ENCODE measurements at regions of chr6 and their contacts with region 1.

Region 1: DNA sequence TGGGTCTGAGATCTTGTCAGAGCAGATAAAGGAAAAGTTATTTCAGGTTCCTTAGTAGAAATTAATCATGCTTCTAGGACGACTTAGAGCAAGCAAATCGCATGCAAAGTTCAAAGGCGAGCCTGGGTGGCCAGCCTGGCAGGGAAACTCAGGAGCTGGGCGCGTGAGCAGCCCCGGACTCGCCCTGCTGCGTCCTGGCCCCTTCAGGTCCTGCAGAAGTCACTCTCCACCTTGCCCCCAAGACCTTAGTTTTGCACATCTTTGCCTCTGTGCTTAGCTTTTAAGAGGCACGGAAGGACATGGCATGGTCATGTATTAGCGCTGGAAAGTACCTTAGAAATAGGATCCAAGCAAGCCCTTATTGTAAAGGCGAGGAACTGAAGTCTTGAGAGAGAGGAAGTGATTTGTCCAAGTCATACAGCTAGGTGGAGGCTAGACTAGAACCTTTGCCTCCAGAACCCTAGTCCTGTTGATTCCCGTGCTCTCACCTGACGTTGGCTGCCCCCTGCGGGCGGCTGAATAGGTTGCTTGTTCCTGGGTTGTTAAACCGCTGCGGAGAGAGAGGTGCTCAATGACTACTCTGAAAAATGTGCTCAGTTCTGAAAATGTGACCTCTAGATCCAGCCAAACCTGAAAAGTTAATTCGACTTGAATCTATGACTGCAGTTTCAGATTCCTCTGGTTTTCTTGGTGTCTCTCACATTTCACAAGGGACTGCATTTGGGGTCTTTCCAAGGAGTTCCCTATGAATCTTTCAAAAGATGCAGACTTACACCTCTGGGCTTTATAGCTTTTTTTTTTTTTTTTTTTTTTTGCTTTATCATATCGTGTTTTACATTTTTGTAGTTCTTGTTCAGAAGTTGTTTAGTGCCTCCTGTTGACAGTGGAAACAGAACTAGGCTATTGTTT is 2.7 kb downstream of the MYB start:
- DNase-seq: peak; percentile 54 to 87 (median 75)
- ATAC-seq: peak; percentile 37
- H3K4me3 ChIP-seq: peak overlapping the region; percentile 52 to 58
- H3K4me3 Mint-ChIP-seq: peak overlapping the region; percentile 91
- H3K27ac ChIP-seq: peak overlapping the region in 1 of 2 experiments; percentile 41
- H3K27ac Mint-ChIP-seq: peak overlapping the region; percentile 84
- H3K4me1 ChIP-seq: peaks cover 9% of the 10 kb centered on the region
- H3K4me1 Mint-ChIP-seq: peaks cover 23% of the 10 kb centered on the region
- H3K27me3 ChIP-seq: no peaks in the 10 kb centered on the region
- H3K27me3 Mint-ChIP-seq: no peaks in the 10 kb centered on the region
- CTCF ChIP-seq: peak; percentile 70

Region 2: DNA sequence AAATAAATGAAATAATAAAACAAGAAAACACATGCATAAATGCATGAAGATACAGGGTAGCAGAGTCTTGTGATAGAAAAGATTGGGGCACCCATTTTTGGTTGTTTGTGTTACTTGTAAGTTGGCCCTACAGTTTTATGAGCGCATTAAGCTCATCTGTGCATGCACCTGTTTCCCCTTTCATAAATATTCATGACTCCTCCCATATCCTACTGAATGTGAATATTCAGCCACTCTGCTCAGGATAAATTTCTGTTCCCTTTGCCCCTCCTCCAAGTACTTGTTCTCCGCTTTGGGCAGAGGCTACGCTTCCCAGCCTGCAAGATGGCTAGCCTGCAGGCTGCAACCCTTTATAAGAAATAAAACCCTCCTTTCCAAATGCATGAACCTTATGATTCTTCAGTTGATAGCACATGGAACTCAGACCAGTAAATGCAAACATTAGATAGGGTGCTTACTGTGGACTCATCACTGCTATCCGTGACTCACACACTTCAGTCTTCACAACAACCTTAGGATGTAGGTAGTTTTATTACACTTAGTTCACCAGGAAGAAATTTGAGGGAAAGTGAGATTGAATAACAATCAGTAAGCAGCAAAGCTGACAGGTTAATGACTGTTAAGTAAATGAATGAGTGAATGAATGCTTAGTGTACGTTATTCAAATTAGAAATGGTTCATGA is 248.9 kb before region 1 on chr6:
- CTCF ChIA-PET with region 1: no interaction called
- POLR2A ChIA-PET with region 1: no interaction called
- intact Hi-C with region 1: no loop called
- DNase-seq: no peak
- ATAC-seq: no peak
- H3K4me3 ChIP-seq: no peak overlapping the region
- H3K4me3 Mint-ChIP-seq: no peak overlapping the region
- H3K27ac ChIP-seq: no peak overlapping the region
- H3K27ac Mint-ChIP-seq: no peak overlapping the region
- H3K4me1 ChIP-seq: peaks cover 6% of the 10 kb centered on the region
- H3K4me1 Mint-ChIP-seq: peaks cover 10% of the 10 kb centered on the region
- H3K27me3 ChIP-seq: no peaks in the 10 kb centered on the region
- H3K27me3 Mint-ChIP-seq: no peaks in the 10 kb centered on the region
- CTCF ChIP-seq: no peak

Region 3: DNA sequence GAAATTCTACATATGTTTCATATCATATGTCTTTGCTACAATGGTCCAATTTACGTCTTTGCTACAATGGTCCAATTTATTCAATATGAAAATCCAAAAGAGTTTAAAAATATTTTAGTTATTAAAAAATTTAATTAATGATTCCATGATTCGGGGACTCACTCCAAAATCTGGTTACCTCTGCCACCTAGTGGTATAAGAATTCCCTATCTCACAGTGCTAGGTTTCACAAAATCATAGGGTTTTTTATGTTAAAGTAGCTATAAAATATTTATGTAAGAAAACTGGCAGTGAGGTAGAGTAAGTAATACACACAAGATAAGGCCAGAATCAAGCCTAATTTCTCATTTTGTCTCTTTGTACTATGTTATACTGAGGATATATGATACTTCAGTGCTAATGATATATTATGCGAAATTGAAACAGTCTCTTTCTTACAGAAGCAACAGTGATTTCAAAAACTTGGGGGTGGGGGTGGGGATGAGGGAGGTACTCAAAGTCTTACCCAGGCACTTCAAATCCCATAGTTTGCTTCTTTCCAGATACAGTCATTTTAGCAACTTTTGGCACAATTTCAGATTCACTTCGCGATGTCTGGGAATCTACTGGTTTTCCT is 181.4 kb before region 1 on chr6:
- CTCF ChIA-PET with region 1: interaction called, 6 read pairs
- POLR2A ChIA-PET with region 1: no interaction called
- intact Hi-C with region 1: loop called in 1 of 2 experiments (anchors 5 kb)
- DNase-seq: peak in 2 of 9 experiments; percentile 26 to 42
- ATAC-seq: peak; percentile 36
- H3K4me3 ChIP-seq: no peak overlapping the region
- H3K4me3 Mint-ChIP-seq: no peak overlapping the region
- H3K27ac ChIP-seq: no peak overlapping the region
- H3K27ac Mint-ChIP-seq: no peak overlapping the region
- H3K4me1 ChIP-seq: peaks cover 14% of the 10 kb centered on the region
- H3K4me1 Mint-ChIP-seq: peaks cover 18% of the 10 kb centered on the region
- H3K27me3 ChIP-seq: no peaks in the 10 kb centered on the region
- H3K27me3 Mint-ChIP-seq: no peaks in the 10 kb centered on the region
- CTCF ChIP-seq: peak; percentile 71

Region 4: GRCh38 chr6:135094403-135094848 is 89.4 kb before region 1 on chr6:
- CTCF ChIA-PET with region 1: interaction called, 8 read pairs
- POLR2A ChIA-PET with region 1: interaction called, 10 read pairs
- intact Hi-C with region 1: loop called (anchors 2 kb)
- DNase-seq: peak in 7 of 9 experiments; percentile 27 to 79 (median 64)
- ATAC-seq: peak; percentile 95
- H3K4me3 ChIP-seq: no peak overlapping the region
- H3K4me3 Mint-ChIP-seq: peak overlapping the region; percentile 0
- H3K27ac ChIP-seq: peak overlapping the region; percentile 29 to 33
- H3K27ac Mint-ChIP-seq: peak overlapping the region; percentile 83
- H3K4me1 ChIP-seq: peaks cover 46% of the 10 kb centered on the region
- H3K4me1 Mint-ChIP-seq: peaks cover 68% of the 10 kb centered on the region
- H3K27me3 ChIP-seq: no peaks in the 10 kb centered on the region
- H3K27me3 Mint-ChIP-seq: no peaks in the 10 kb centered on the region
- CTCF ChIP-seq: no peak

Region 5: GRCh38 chr6:135162678-135163439 is 20.9 kb before region 1 on chr6:
- CTCF ChIA-PET with region 1: interaction called, 18 read pairs
- POLR2A ChIA-PET with region 1: interaction called, 4 read pairs
- intact Hi-C with region 1: loop called (anchors 2 kb)
- DNase-seq: peak in 6 of 9 experiments; percentile 24 to 64 (median 40)
- ATAC-seq: no peak
- H3K4me3 ChIP-seq: no peak overlapping the region
- H3K4me3 Mint-ChIP-seq: peak overlapping the region; percentile 42
- H3K27ac ChIP-seq: no peak overlapping the region
- H3K27ac Mint-ChIP-seq: peak overlapping the region; percentile 73
- H3K4me1 ChIP-seq: peaks cover 20% of the 10 kb centered on the region
- H3K4me1 Mint-ChIP-seq: peaks cover 26% of the 10 kb centered on the region
- H3K27me3 ChIP-seq: no peaks in the 10 kb centered on the region
- H3K27me3 Mint-ChIP-seq: no peaks in the 10 kb centered on the region
- CTCF ChIP-seq: peak; percentile 62

Region 6: DNA sequence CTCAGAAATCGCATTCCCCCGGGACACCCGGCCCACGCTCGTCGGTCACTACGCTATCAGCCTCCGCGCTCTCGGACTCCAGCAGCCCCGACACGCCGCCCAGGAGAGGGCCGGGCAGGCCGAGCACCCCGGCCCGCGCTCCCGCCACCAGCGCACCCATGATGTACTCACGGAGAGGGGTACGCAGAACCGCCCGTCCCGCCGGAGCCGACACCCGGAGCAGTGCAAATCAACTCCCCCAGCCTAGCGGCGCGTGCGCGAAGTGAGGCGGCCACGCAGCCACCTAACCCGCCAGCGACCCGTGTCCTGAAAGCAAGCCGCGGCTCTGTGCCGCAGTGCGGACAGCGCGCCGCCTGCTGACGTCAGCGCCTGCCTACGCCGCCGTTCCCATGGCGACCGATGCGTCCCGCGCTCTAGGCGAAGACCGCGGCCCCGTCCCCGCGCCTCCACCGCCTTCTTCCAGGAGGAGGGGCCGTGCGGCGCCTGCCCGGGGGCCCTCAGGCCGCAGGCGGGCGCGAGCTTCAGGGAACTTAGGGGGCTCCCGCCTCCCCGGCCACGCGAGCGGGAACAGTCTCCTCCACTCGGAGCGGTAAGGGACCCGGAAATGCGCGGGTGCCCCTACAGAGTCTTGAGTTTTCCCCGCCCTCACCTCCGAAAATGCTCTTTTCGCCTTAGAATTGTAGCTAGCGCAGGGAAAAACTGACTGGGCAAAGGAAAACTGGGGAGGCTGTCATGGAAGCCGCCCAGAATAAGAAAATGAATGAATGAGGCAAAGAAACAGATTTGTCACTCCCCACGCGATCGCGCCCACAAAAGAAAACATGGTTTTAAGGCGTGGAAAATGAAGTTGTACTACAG is 313.9 kb after region 1 on chr6 and contains the start of gene AHI1:
- CTCF ChIA-PET with region 1: no interaction called
- POLR2A ChIA-PET with region 1: no interaction called
- intact Hi-C with region 1: loop called in 1 of 2 experiments (anchors 10 kb)
- DNase-seq: peak; percentile 81 to 95 (median 86)
- ATAC-seq: peak; percentile 72
- H3K4me3 ChIP-seq: peak within 1 kb of the TSS; percentile 87 to 95
- H3K4me3 Mint-ChIP-seq: no peak within 1 kb of the TSS
- H3K27ac ChIP-seq: peak within 1 kb of the TSS; percentile 91 to 98
- H3K27ac Mint-ChIP-seq: no peak within 1 kb of the TSS
- H3K4me1 ChIP-seq: peaks cover 6% of the 10 kb centered on the region
- H3K4me1 Mint-ChIP-seq: peaks cover 8% of the 10 kb centered on the region
- H3K27me3 ChIP-seq: no peaks in the 10 kb centered on the region
- H3K27me3 Mint-ChIP-seq: no peaks in the 10 kb centered on the region
- CTCF ChIP-seq: no peak
- total RNA-seq, gene AHI1: 16.0 to 17.9 TPM

Measured in CD8-positive, alpha-beta T cell (primary cell).